B cell (primary cell): ENCODE measurements at regions of chr3 and their contacts with region 1.

Region 1: DNA sequence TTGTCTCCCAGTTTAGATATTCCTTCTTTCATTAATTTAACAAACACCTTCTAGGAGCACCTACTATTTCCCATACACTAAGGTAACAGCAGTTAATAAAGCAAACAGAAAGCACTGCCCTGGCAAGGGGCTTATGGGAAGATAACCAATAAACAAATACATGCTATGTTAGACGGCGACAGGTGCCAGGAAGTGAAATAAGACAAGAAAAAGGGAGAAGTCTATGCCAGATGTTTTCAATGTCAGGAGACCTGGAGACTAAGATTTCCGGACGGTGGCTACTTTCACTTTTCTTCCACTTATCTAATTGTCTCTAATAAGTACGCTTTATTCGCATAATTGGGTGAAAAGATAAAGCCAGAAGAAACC is 32.5 kb upstream of the ZNF445 start:
- DNase-seq: peak; percentile 73
- ATAC-seq: peak; percentile 32
- H3K4me3 ChIP-seq: peak overlapping the region; percentile 74 to 95 (median 88)
- H3K4me3 Mint-ChIP-seq: peak overlapping the region; percentile 90
- H3K27ac ChIP-seq: peak overlapping the region; percentile 88 to 94
- H3K27ac Mint-ChIP-seq: peak overlapping the region; percentile 97
- H3K4me1 ChIP-seq: peaks cover 19 to 25% of the 10 kb centered on the region in 2 donors
- H3K4me1 Mint-ChIP-seq: peaks cover 46% of the 10 kb centered on the region
- H3K27me3 ChIP-seq: no peaks in the 10 kb centered on the region
- H3K27me3 Mint-ChIP-seq: no peaks in the 10 kb centered on the region
- CTCF ChIP-seq: no peak

Region 2: GRCh38 chr3:44323341-44323955 is 186.5 kb before region 1 on chr3:
- CTCF ChIA-PET with region 1: interaction called, 6 read pairs
- POLR2A ChIA-PET with region 1: no interaction called
- intact Hi-C with region 1: loop called (anchors 5 kb)
- DNase-seq: peak; percentile 57
- ATAC-seq: no peak
- H3K4me3 ChIP-seq: no peak overlapping the region
- H3K4me3 Mint-ChIP-seq: no peak overlapping the region
- H3K27ac ChIP-seq: no peak overlapping the region
- H3K27ac Mint-ChIP-seq: no peak overlapping the region
- H3K4me1 ChIP-seq: no peaks in the 10 kb centered on the region
- H3K4me1 Mint-ChIP-seq: no peaks in the 10 kb centered on the region
- H3K27me3 ChIP-seq: peaks cover 0 to 3% (median 0%) of the 10 kb centered on the region in 4 experiments
- H3K27me3 Mint-ChIP-seq: peaks cover 10% of the 10 kb centered on the region
- CTCF ChIP-seq: peak; percentile 80

Region 3: GRCh38 chr3:44477312-44478030 is 32.5 kb before region 1 on chr3 and contains the start of gene ZNF445:
- CTCF ChIA-PET with region 1: interaction called, 7 read pairs
- POLR2A ChIA-PET with region 1: interaction called, 11 read pairs
- intact Hi-C with region 1: loop called (anchors 1 kb)
- DNase-seq: peak; percentile 85
- ATAC-seq: peak; percentile 91
- H3K4me3 ChIP-seq: peak within 1 kb of the TSS; percentile 47 to 90 (median 69)
- H3K4me3 Mint-ChIP-seq: peak within 1 kb of the TSS; percentile 94
- H3K27ac ChIP-seq: peak within 1 kb of the TSS in 1 of 2 donors; percentile 44
- H3K27ac Mint-ChIP-seq: peak within 1 kb of the TSS; percentile 89
- H3K4me1 ChIP-seq: peaks cover 11 to 18% of the 10 kb centered on the region in 2 donors
- H3K4me1 Mint-ChIP-seq: peaks cover 34% of the 10 kb centered on the region
- H3K27me3 ChIP-seq: no peaks in the 10 kb centered on the region
- H3K27me3 Mint-ChIP-seq: no peaks in the 10 kb centered on the region
- CTCF ChIP-seq: no peak
- total RNA-seq, gene ZNF445: 28.1 and 29.7 TPM in 2 replicates

Region 4: DNA sequence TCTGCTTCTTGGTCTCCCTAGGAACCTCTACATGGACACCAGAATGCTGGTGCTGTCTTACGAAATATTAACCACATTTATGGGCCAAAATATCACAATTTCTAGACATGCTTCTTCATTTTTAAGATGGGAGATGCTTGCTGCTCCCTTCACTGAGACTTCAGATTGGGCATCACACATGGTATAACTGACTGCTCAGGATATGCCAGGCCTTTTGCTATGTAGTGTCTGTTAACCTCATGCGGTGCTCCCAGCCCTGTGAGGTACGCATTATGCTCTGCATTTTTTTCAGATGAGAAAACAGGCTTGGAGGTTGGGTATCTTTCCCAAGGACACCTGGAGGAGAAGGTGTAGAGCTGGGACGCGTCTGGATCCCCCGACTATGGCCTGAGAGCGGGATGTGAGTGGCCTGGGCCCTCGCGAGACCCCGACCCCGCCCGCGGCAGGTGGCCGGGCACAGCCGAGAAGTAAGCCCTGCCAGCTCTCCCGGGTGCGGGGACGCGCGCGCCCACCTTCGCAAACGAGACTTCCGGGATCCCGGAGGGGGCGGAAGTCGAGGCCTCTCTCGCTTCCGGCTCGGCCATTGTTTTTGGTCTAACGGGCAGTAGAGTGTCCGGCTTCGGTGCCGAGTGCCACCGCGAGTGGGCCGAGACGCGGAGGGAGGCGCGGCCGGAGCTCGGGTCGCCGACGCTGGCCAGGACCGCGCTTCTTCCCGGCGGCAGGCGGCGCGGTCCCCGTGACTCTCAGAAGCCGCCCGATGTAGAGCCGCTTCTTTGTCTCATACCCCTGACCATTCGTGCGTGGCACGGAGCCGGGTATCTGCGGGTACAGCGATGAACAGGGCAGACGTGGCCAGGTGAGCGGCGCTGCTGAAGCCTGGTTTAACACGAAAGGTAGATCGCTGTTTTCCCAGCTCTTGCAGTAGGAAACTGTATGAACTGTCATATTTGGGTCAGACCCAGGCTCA is 44.9 kb after region 1 on chr3 and contains the start of gene ZKSCAN7:
- CTCF ChIA-PET with region 1: no interaction called
- POLR2A ChIA-PET with region 1: no interaction called
- intact Hi-C with region 1: loop called (anchors 2 kb)
- DNase-seq: peak; percentile 74
- ATAC-seq: peak; percentile 74
- H3K4me3 ChIP-seq: peak within 1 kb of the TSS; percentile 49 to 91 (median 79)
- H3K4me3 Mint-ChIP-seq: peak within 1 kb of the TSS; percentile 90
- H3K27ac ChIP-seq: peak within 1 kb of the TSS; percentile 40 to 79
- H3K27ac Mint-ChIP-seq: peak within 1 kb of the TSS; percentile 83
- H3K4me1 ChIP-seq: peaks cover 13 to 16% of the 10 kb centered on the region in 2 donors
- H3K4me1 Mint-ChIP-seq: peaks cover 24% of the 10 kb centered on the region
- H3K27me3 ChIP-seq: peaks cover 0 to 2% (median 0%) of the 10 kb centered on the region in 4 experiments
- H3K27me3 Mint-ChIP-seq: peaks cover 7% of the 10 kb centered on the region
- CTCF ChIP-seq: peak; percentile 10
- total RNA-seq, gene ZKSCAN7: 8.0 and 8.5 TPM in 2 replicates

Region 5: DNA sequence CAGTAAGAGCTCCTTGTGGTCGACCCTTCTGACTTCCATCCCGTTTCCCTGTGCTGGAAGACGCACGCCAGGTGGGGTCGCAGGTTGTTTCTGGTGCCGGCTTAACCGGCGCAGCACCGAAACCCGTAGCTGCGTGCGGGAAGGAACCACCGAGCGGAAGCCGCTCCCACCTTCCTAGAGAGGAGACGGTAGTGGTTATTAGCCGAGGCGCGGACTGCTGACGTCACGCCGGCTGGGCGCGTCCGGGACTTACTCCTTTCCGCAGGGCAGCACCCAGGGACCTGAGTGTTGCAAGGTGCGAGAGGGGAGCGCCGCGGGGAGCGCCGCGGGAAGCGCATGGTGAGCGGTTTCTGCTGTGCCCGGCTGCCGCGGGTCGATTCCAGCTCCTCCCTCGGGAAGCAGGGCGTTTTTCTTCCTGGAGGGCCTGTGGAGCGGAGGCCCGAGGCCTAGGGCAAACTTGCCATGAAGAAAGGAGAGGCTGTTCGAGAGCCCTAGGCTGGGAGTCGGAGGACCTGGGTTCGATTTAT is 219.5 kb after region 1 on chr3 and contains the start of gene ZNF501:
- CTCF ChIA-PET with region 1: no interaction called
- POLR2A ChIA-PET with region 1: no interaction called
- intact Hi-C with region 1: loop called (anchors 1 kb)
- DNase-seq: peak; percentile 90
- ATAC-seq: peak; percentile 94
- H3K4me3 ChIP-seq: peak within 1 kb of the TSS; percentile 35 to 89 (median 77)
- H3K4me3 Mint-ChIP-seq: peak within 1 kb of the TSS; percentile 96
- H3K27ac ChIP-seq: peak within 1 kb of the TSS; percentile 15 to 32
- H3K27ac Mint-ChIP-seq: peak within 1 kb of the TSS; percentile 86
- H3K4me1 ChIP-seq: peaks cover 6 to 12% of the 10 kb centered on the region in 2 donors
- H3K4me1 Mint-ChIP-seq: peaks cover 13% of the 10 kb centered on the region
- H3K27me3 ChIP-seq: no peaks in the 10 kb centered on the region
- H3K27me3 Mint-ChIP-seq: no peaks in the 10 kb centered on the region
- CTCF ChIP-seq: no peak
- total RNA-seq, gene ZNF501: 6.1 and 7.2 TPM in 2 replicates

Region 6: GRCh38 chr3:44976002-44976815 is 466.2 kb after region 1 on chr3 and contains the starts of genes EXOSC7 and ZDHHC3:
- CTCF ChIA-PET with region 1: no interaction called
- POLR2A ChIA-PET with region 1: no interaction called
- intact Hi-C with region 1: loop called (anchors 5 kb)
- DNase-seq: peak; percentile 93
- ATAC-seq: peak; percentile 94
- H3K4me3 ChIP-seq: peak within 1 kb of the TSS; percentile 85 to 98 (median 93)
- H3K4me3 Mint-ChIP-seq: peak within 1 kb of the TSS; percentile 93
- H3K27ac ChIP-seq: peak within 1 kb of the TSS; percentile 79 to 80
- H3K27ac Mint-ChIP-seq: peak within 1 kb of the TSS; percentile 93
- H3K4me1 ChIP-seq: peaks cover 25 to 27% of the 10 kb centered on the region in 2 donors
- H3K4me1 Mint-ChIP-seq: peaks cover 50% of the 10 kb centered on the region
- H3K27me3 ChIP-seq: no peaks in the 10 kb centered on the region
- H3K27me3 Mint-ChIP-seq: no peaks in the 10 kb centered on the region
- CTCF ChIP-seq: no peak
- total RNA-seq, gene EXOSC7: 32.9 and 40.0 TPM in 2 replicates
- total RNA-seq, gene ZDHHC3: 46.4 and 52.6 TPM in 2 replicates